Activated naive CD4-positive, alpha-beta T cell treated with anti-CD3 and anti-CD28 coated beads for 36 hours (primary cell): ENCODE measurements at regions of chr10 and their contacts with region 1.

Region 1: GRCh38 chr10:102072673-102073527 is 7.8 kb downstream of the HPS6 start:
- DNase-seq: peak; percentile 90
- H3K4me3 Mint-ChIP-seq: no peak overlapping the region
- H3K27ac Mint-ChIP-seq: no peak overlapping the region
- H3K4me1 Mint-ChIP-seq: no peaks in the 10 kb centered on the region
- H3K27me3 Mint-ChIP-seq: no peaks in the 10 kb centered on the region

Region 2: DNA sequence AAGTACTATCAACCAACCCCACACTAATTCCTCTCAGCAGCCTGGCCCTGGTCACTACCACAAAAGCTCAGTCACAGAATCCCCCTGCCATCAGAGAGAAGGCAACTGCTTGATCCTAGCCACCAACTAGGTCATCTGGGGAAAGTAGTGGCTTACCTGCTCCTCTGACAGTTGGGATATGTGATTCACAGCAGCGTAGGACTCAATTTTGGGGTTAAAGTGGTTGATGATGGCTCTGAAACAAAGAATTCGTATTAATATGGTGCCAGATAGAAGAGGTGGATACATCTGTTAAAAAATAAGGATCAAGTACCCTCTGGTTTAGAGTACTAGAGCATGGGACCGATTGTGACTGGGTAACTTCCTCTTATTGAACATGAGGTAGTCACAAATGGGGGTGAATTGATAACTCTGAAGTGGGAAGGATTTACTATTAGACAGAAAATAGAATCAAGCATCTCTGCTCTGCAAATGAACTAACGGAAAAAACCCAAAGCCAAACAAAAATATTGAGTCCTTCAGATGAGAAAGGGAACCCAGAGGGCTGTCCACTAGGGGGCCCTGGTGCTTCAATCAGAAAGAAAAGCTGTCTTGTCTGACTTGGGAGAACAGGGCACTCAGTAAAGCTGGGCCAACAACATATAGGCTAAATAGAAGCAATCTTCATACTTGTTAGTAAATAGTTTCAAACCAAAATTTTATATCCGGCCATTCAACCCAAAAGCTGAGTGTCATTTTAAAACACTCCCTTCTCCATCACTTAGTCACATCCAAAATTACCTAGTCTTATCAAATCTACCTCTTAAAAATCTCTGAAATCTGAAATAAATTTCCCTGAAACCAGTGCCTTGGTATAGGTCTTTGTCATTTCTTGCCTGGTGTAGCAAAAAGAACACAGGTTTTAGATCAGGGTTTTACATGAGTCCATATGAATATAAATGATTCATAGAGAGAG is 183.4 kb before region 1 on chr10:
- CTCF ChIA-PET with region 1: interaction called, 16 read pairs
- intact Hi-C with region 1: loop called (anchors 1 kb)
- DNase-seq: peak; percentile 90
- H3K4me3 Mint-ChIP-seq: no peak overlapping the region
- H3K27ac Mint-ChIP-seq: no peak overlapping the region
- H3K4me1 Mint-ChIP-seq: peaks cover 5% of the 10 kb centered on the region
- H3K27me3 Mint-ChIP-seq: no peaks in the 10 kb centered on the region

Region 3: GRCh38 chr10:102055647-102056419 is 17.1 kb before region 1 on chr10 and contains the start of gene ARMH3:
- CTCF ChIA-PET with region 1: interaction called, 16 read pairs
- intact Hi-C with region 1: no loop called
- DNase-seq: peak; percentile 96
- H3K4me3 Mint-ChIP-seq: peak within 1 kb of the TSS; percentile 91
- H3K27ac Mint-ChIP-seq: peak within 1 kb of the TSS; percentile 90
- H3K4me1 Mint-ChIP-seq: peaks cover 41% of the 10 kb centered on the region
- H3K27me3 Mint-ChIP-seq: no peaks in the 10 kb centered on the region
- total RNA-seq, gene ARMH3: 12.3 to 12.6 TPM

Region 4: DNA sequence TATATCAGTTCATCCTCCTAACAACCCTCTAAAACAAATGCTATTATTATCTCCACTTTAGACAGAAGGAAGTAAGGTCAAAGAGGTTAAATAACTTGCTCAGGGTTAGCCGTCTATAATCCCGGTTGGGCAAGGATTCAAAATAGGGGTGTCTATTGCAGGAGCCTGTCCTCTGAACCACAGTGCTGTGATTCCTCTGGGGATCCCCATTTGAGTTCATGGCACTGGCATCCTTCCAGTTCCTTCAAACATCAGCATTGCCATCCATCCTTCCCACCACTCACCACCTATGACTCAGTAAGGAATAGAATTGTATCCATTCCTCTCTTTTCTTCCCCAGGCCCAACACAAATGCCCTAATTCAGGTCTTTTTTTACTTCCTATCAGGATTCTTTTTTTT is 17.9 kb after region 1 on chr10:
- CTCF ChIA-PET with region 1: interaction called, 13 read pairs
- intact Hi-C with region 1: no loop called
- DNase-seq: no peak
- H3K4me3 Mint-ChIP-seq: no peak overlapping the region
- H3K27ac Mint-ChIP-seq: no peak overlapping the region
- H3K4me1 Mint-ChIP-seq: no peaks in the 10 kb centered on the region
- H3K27me3 Mint-ChIP-seq: no peaks in the 10 kb centered on the region

Region 5: GRCh38 chr10:102114861-102115618 is 42.1 kb after region 1 on chr10:
- CTCF ChIA-PET with region 1: interaction called, 14 read pairs
- intact Hi-C with region 1: no loop called
- DNase-seq: peak; percentile 92
- H3K4me3 Mint-ChIP-seq: peak overlapping the region; percentile 93
- H3K27ac Mint-ChIP-seq: peak overlapping the region; percentile 98
- H3K4me1 Mint-ChIP-seq: peaks cover 53% of the 10 kb centered on the region
- H3K27me3 Mint-ChIP-seq: no peaks in the 10 kb centered on the region